Sigmoid colon (tissue), 7 donors: ENCODE measurements at regions of chr4 and their contacts with region 1.

Region 1: DNA sequence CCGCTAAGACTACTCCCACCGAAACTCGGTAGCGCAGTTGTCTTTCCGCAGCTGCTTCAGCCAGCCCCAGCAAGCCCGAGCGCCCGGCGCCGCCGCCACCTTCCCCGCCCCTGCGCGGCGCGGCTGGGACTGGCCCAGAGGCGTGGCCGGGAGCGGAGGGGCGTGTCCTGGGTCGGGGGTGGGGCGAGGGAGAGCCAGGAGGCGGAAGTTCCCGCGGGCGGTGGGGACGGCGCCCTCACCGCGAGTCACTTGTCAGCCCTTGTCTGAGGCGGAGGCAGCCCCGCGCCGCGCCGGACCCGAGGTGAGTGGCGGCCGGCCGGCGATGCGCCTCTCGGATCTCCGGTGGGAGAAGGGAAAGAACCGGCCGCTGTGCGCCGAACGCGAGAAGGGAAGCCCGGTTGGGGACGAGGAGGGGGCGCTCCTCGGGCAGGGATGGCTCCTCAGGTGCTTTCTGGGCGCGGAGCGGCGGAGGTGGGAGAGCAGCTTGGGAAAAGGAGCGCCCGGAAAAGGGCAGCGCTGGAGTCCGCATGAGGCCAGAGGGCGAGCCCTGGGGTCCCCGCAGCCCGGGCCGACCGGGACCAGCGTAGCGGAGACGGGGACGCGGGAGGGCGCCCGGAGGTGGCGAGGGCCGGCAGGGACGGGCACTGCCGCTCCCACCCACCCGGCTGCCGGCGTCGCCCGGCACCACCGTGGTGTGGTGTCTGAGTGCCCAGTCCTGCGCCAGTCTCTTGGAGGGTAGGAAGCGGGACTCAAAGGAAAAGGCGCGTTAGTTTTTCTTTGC is at the start of gene PDLIM5:
- DNase-seq: peak; percentile 94
- H3K4me3 ChIP-seq: peak within 1 kb of the TSS; percentile 89 to 98 (median 90)
- H3K27ac ChIP-seq: peak within 1 kb of the TSS; percentile 97 to 100 (median 98)
- H3K4me1 ChIP-seq: peaks cover 0 to 37% (median 20%) of the 10 kb centered on the region in 4 donors
- H3K27me3 ChIP-seq: no peaks in the 10 kb centered on the region
- CTCF ChIP-seq: no peak
- EP300 ChIP-seq: peak in 1 of 4 donors; percentile 6
- POLR2A ChIP-seq: peak; percentile 95 to 96
- total RNA-seq, gene PDLIM5: 167 to 221 (median 204) TPM

Region 2: DNA sequence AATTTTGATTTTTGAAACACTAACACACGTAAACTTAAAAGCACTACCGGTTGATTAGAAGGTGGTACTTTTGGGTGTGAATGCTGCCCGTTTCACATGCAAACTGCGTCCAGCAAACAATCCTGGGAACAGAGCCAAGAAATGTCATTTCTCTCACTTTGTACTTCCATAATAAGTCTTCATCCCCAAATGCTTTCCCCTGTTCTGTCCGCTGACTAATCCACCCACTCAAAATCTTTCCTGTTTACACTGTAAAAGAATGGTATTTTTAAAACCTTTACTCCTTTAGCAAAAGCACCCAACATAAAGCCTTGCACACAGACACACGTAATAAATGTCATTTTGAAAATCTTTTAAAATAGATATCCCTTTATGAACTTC is 39.2 kb before region 1 on chr4:
- intact Hi-C with region 1: loop called (anchors 2 kb)
- DNase-seq: no peak
- H3K4me3 ChIP-seq: peak overlapping the region in 2 of 4 donors; percentile 9 to 17
- H3K27ac ChIP-seq: peak overlapping the region; percentile 56 to 81 (median 70)
- H3K4me1 ChIP-seq: peaks cover 0 to 51% (median 36%) of the 10 kb centered on the region in 4 donors
- H3K27me3 ChIP-seq: no peaks in the 10 kb centered on the region
- CTCF ChIP-seq: no peak
- EP300 ChIP-seq: no peak
- POLR2A ChIP-seq: no peak

Region 3: DNA sequence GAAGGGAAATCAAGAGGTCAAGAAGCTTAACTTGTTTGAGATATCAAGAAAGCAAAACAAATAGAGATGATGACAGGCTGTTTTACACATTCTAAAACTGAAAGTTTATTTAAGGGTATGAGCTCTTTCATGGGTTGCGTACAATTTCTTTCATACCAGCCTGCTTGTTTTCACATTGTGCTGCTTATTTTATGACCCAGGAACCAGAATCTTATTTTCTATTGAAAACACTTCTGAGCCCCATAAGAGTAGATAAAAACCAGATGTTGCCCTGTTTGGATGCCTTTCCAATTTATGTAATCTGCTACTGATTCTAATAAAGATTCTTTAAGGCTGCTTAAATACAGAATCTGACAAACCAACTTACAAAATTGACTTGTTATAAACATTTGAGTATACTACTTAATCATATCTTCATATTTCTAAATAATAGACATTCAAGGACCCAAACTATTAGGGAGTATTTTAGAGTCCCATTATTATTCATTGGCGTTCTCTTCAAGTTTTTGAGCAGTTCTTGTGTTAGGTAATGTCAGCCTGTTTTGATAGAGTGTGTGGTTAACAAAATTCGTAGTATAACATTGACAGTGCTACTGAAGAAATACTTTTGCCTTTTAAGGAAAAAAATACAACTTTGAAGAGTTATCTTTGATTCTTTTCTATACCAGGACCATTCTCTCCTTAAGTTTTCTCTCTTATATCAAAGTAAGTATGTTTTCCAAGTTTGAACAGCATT is 74.3 kb after region 1 on chr4:
- intact Hi-C with region 1: loop called (anchors 2 kb)
- DNase-seq: no peak
- H3K4me3 ChIP-seq: peak overlapping the region in 2 of 4 donors; percentile 12 to 15
- H3K27ac ChIP-seq: peak overlapping the region; percentile 51 to 84 (median 74)
- H3K4me1 ChIP-seq: peaks cover 0 to 84% (median 54%) of the 10 kb centered on the region in 4 donors
- H3K27me3 ChIP-seq: no peaks in the 10 kb centered on the region
- CTCF ChIP-seq: no peak
- EP300 ChIP-seq: peak in 1 of 4 donors; percentile 60
- POLR2A ChIP-seq: no peak

Region 4: DNA sequence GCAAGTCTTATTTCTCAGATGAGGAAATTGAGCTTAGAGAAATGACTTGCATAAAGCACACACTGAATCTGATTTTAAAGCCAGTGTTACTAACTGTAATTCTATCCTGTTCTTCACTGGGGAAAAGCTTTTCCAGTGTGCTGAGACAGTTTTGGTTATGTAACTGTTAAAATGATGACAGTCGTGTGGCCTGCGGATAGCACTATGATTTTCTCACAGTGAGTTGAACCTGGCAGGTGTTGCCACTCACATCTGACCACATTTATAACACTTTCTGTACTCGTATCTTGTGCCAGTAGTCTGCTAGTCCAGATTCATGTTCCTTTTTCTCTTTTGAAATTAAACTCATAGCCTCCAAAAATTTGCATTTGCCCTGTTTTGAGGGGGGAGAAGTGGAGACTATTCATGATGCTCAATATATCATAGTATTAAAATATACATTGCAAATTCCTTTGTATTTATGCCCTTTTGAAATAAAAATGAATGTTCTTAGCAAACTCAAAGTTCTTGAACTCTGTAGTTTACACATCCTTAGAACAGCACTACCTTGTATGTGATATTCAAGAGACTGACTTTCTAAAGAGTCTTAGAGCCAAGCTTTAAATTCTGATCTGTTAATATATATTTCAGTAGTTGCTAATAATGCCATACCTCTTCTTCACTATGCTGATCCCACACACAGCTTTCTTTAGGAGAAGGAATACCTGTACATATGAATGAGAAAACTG is 132.2 kb after region 1 on chr4:
- intact Hi-C with region 1: loop called (anchors 5 kb)
- DNase-seq: no peak
- H3K4me3 ChIP-seq: no peak overlapping the region
- H3K27ac ChIP-seq: peak overlapping the region in 1 of 4 donors; percentile 23
- H3K4me1 ChIP-seq: peaks cover 0 to 36% (median 24%) of the 10 kb centered on the region in 4 donors
- H3K27me3 ChIP-seq: no peaks in the 10 kb centered on the region
- CTCF ChIP-seq: no peak
- EP300 ChIP-seq: no peak
- POLR2A ChIP-seq: no peak

Region 5: GRCh38 chr4:94595879-94596483 is 144.1 kb after region 1 on chr4:
- intact Hi-C with region 1: loop called (anchors 5 kb)
- DNase-seq: no peak
- H3K4me3 ChIP-seq: no peak overlapping the region
- H3K27ac ChIP-seq: no peak overlapping the region
- H3K4me1 ChIP-seq: peaks cover 0 to 6% (median 0%) of the 10 kb centered on the region in 4 donors
- H3K27me3 ChIP-seq: no peaks in the 10 kb centered on the region
- CTCF ChIP-seq: peak; percentile 38 to 68 (median 52)
- EP300 ChIP-seq: no peak
- POLR2A ChIP-seq: no peak